H1 (cell line): ENCODE measurements at regions of chr19 and their contacts with region 1.

Region 1: GRCh38 chr19:17654993-17655392 is 33.2 kb downstream of the UNC13A start:
- DNase-seq: peak in 1 of 2 experiments; percentile 61
- H3K4me3 ChIP-seq: no peak overlapping the region
- H3K27ac ChIP-seq: no peak overlapping the region
- H3K4me1 ChIP-seq: peaks cover 0 to 5% (median 3%) of the 10 kb centered on the region in 4 experiments; a peak in 3 of 7 replicates
- H3K27me3 ChIP-seq: no peaks in the 10 kb centered on the region
- CTCF ChIP-seq: no peak
- EP300 ChIP-seq: no peak
- POLR2A ChIP-seq: no peak
- RAD21 ChIP-seq: no peak

Region 2: DNA sequence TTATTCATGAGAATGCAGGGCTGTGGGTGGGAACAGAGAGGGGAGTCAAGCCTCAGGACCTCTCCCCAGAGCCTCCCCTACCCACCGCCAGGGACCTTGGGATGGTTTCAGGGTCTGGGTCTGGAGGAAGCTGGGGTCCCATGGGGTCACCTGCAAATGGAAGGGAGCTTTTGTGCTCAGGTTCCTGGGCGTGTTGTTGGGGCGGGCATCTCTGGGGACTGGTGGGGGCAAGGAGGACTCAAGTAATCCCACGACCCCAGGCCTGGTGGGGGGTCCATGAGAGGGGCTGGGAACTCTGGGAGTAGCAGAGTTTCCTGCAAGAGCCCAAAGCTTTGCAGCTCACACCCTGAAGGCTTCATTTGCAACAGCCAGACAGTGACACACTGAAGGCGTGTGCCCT is 27.1 kb before region 1 on chr19:
- CTCF ChIA-PET with region 1: no interaction called
- POLR2A ChIA-PET with region 1: no interaction called
- DNase-seq: no peak
- H3K4me3 ChIP-seq: no peak overlapping the region
- H3K27ac ChIP-seq: no peak overlapping the region
- H3K4me1 ChIP-seq: no peaks in the 10 kb centered on the region
- H3K27me3 ChIP-seq: no peaks in the 10 kb centered on the region
- CTCF ChIP-seq: no peak
- EP300 ChIP-seq: no peak
- POLR2A ChIP-seq: no peak
- RAD21 ChIP-seq: no peak

Region 3: DNA sequence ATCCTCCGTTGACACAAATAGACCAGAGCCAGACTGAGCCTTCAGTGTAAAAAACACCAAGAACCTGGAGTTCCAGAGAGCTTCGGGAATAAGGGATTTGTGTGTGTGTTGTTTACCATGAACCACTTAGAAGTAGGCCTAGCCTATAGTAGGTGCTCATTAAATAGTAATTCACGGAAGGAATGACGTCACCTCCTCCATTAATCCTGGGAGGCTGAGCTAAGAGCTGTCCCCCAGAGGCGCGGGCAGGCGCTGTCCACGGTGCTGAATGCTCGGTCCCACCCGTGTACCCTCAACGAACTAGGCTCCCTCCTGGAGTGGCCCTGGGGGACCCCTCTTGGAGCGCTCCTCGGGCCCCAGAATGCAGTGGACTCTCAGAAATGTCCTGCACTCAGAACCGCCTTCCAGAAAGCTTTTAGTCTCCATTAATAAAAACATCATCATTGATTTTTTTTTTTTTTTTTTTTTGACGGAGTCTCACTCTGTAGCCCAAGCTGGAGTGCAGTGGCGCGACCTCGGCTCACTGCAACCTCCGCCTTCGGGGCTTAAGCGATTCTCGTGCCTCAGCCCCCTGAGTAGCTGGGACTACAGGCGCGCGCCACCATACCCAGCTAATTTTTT is 26.6 kb after region 1 on chr19:
- CTCF ChIA-PET with region 1: interaction called, 13 read pairs
- POLR2A ChIA-PET with region 1: no interaction called
- DNase-seq: peak in 1 of 2 experiments; percentile 90
- H3K4me3 ChIP-seq: no peak overlapping the region
- H3K27ac ChIP-seq: no peak overlapping the region
- H3K4me1 ChIP-seq: peaks cover 2 to 17% (median 10%) of the 10 kb centered on the region in 4 experiments
- H3K27me3 ChIP-seq: no peaks in the 10 kb centered on the region
- CTCF ChIP-seq: no peak
- EP300 ChIP-seq: no peak
- POLR2A ChIP-seq: no peak
- RAD21 ChIP-seq: no peak